ENCODE measurements at regions of chr15 and their contacts with region 1.

Region 1: DNA sequence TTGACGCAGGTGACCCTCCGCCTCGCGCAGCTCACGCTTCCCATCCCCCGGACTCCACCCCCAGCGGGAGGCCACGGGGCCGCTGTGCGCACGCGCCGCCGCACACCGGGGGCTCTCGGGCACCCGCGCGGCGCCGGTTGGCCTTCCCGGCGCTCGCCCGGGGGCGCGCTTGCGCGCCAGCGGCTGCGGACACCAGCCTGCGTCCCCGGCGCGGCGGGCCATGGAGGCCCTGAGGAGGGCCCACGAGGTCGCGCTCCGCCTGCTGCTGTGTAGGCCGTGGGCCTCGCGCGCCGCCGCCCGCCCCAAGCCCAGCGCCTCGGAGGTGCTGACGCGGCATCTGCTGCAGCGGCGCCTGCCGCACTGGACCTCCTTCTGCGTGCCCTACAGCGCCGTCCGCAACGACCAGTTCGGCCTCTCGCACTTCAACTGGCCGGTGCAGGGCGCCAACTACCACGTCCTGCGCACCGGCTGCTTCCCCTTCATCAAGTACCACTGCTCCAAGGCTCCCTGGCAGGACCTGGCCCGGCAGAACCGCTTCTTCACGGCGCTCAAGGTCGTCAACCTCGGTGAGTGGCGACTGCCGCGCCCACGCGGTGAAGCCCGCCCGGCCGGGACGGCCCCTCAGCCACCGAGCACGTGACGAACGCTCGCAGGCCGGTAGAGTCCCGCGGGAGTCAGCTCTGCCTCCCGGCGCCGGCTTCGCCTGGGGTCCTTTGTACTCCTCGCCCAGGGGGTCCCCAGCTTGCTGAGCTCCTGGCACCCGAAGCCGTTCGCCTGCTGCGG is at the start of gene C15orf61:
- DNase-seq: peak; percentile 87
- H3K4me3 Mint-ChIP-seq: peak within 1 kb of the TSS; percentile 92
- H3K27ac Mint-ChIP-seq: peak within 1 kb of the TSS; percentile 86
- H3K4me1 Mint-ChIP-seq: peaks cover 26% of the 10 kb centered on the region
- H3K27me3 Mint-ChIP-seq: no peaks in the 10 kb centered on the region
- total RNA-seq, gene C15orf61: 5.2 to 5.3 TPM

Region 2: DNA sequence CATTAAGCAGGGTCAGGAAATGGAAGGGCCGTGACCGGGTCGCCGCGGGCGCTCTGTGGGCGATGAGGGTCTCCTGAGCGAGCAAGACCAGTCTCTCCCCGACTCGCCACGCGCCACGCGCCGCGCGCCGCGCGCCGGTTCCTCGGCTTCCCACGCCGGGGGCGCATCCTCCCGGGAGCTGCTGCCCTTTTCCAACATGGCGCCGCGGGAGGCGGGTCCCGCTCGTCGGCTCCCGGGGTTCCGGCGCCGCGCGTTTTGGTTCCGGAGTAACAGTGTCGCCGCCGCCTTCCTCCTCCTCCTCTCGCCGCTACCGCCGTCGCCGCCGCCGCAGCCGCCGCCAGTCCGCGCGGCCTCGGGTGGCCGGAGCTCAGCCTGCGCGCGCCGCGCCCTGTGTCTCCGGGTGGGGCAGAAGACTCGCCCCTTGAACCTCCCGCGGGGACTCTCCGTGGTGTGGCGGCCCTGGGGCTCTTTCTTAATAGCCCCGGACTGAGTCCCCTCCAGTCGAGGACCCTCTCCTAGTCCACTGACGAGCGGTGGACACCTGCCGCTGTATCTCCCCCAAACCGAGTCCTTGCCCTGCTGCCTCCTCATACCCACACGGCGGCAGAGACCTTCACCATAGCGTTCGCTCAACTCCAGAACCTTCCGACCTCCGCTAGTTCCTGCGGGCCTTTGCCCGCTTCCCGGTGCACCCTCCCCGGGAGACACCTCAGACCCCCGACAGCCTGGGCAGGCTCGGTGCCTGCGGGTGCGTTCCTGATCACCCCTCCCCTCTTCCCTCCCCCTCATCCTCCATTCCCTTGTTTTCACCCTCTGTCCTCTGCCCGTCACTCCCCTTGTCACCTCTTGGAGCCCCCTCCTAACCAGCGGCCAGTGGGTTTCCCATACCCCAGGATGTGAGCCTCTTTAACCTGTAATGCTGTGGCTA is 21.5 kb after region 1 on chr15 and contains the start of gene MAP2K5:
- CTCF ChIA-PET with region 1: interaction called, 5 read pairs
- POLR2A ChIA-PET with region 1: interaction called, 24 read pairs
- DNase-seq: peak; percentile 85
- H3K4me3 Mint-ChIP-seq: peak within 1 kb of the TSS; percentile 89
- H3K27ac Mint-ChIP-seq: peak within 1 kb of the TSS; percentile 88
- H3K4me1 Mint-ChIP-seq: peaks cover 52% of the 10 kb centered on the region
- H3K27me3 Mint-ChIP-seq: peaks cover 5% of the 10 kb centered on the region
- total RNA-seq, gene MAP2K5: 16.9 to 17.4 TPM

Region 3: GRCh38 chr15:67652586-67652985 is 131.4 kb after region 1 on chr15:
- CTCF ChIA-PET with region 1: no interaction called
- POLR2A ChIA-PET with region 1: no interaction called
- DNase-seq: no peak
- H3K4me3 Mint-ChIP-seq: no peak overlapping the region
- H3K27ac Mint-ChIP-seq: no peak overlapping the region
- H3K4me1 Mint-ChIP-seq: no peaks in the 10 kb centered on the region
- H3K27me3 Mint-ChIP-seq: no peaks in the 10 kb centered on the region

Measured in activated CD4-positive, alpha-beta memory T cell treated with anti-CD3 and anti-CD28 coated beads, Interleukin-2, amount 10 ng/mL, durations not matched to agents 7 days and 5 days (primary cell).